ENCODE measurements at regions of chr1 and their contacts with region 1.

Region 1: DNA sequence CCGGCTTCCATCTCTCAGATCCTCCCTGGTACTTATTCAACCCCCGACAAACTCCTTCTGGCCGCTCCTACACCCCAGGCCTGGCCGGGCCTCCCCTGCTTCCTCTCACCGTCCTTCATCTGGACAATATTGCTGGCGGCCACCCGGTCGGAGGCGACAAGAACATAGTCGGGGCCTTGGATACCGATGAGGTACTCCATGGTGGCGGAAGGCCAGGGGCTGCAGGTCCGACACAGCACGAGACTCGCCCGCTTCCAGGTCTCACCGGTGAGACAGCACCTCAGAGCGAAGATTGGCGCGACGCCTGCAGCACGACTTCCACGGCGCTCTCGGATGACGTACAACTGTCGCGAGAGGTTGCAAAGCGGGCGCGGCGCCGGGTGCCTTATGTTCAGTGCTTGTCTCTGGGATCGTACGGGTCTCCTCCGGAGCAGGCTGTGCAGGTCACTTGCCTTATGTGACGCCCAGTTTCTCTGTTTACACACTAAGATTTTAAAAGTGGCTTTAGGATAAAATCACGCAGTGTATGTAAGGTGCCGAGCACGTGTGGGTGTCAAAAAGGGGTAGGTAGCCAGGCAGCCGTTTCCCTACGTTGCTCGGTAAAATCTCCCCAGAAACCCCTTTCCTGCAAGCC is at the start of gene PSMB2:
- DNase-seq: peak; percentile 88 to 98 (median 94)

Region 2: GRCh38 chr1:35557292-35558063 is 83.9 kb before region 1 on chr1 and contains the starts of genes KIAA0319L and NCDN:
- intact Hi-C with region 1: loop called (anchors 5 kb)
- DNase-seq: peak; percentile 94 to 99 (median 96)

Region 3: DNA sequence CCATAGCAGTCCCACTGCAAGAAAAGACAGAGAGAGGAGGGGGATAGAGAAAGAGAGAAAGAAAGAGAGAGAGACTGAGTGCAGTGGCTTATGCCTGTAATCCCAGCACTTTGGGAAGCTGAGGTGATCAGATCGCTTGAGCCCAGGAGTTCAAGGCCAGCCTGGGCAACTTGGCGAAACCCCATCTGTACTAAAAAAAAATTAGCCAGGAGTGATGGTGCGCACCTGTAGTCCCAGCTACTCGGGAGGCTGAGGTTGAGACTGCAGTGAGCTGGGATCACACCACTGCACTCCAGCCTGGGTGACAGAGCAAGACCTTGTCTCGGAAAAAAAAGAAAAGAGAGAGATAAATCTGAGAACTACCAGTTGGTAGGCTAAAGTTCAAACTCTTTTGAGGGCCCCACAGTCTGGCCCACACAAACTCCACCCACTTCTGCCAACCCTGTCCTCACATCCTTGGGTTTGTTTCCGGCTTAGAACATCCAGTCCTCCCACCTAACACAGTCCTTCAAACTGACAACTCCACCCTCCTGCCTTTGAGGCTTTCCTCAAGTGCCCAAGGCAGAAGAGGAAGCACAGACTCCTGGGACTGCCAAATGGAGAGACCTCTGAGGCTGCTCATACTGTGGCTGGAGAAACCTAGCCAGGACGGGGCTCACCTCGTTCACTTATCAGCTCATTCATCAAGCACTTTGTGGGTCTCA is 48.2 kb before region 1 on chr1:
- intact Hi-C with region 1: no loop called
- DNase-seq: no peak

Region 4: GRCh38 chr1:35715568-35716002 is 74.2 kb after region 1 on chr1:
- intact Hi-C with region 1: loop called (anchors 2 kb)
- DNase-seq: peak; percentile 59 to 97 (median 82)